ENCODE measurements at regions of chr17 and their contacts with region 1.

Region 1: GRCh38 chr17:70767102-70767701 is 597.9 kb downstream of the KCNJ2 start:
- DNase-seq: peak; percentile 28
- H3K4me3 Mint-ChIP-seq: no peak overlapping the region
- H3K27ac Mint-ChIP-seq: no peak overlapping the region
- H3K4me1 Mint-ChIP-seq: no peaks in the 10 kb centered on the region
- H3K27me3 Mint-ChIP-seq: no peaks in the 10 kb centered on the region
- CTCF ChIP-seq: peak; percentile 57

Region 2: GRCh38 chr17:70539132-70539924 is 227.9 kb before region 1 on chr17:
- CTCF ChIA-PET with region 1: no interaction called
- intact Hi-C with region 1: no loop called
- DNase-seq: no peak
- H3K4me3 Mint-ChIP-seq: no peak overlapping the region
- H3K27ac Mint-ChIP-seq: no peak overlapping the region
- H3K4me1 Mint-ChIP-seq: no peaks in the 10 kb centered on the region
- H3K27me3 Mint-ChIP-seq: no peaks in the 10 kb centered on the region
- CTCF ChIP-seq: no peak

Region 3: DNA sequence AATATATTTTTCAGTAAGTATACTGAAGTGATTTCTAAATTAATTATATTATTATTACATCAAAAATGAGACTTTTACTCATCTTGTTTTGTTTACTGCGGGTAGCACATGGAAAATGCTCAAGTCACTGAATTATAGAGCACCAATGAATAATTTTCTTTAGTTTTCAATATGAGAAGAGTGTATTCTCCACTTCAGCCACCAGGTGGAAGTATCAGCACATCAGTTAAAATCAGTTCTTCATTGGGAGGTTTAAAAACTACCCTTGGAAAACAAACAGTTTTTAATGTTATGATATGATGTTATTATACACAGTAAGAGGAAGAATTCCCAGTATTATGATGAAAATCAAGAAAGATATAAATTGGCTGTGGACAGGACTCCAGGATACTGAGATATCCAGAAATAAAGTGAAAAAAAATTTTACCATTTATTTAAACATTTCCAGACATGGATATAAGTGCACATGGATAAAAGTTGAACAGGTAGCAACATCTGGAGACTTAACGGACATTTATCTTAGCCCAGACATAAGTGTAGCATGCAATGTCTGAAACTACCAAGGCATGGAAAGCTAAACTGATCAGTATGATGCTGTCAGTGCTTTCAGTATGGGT is 130.6 kb before region 1 on chr17:
- CTCF ChIA-PET with region 1: no interaction called
- intact Hi-C with region 1: loop called (anchors 5 kb)
- DNase-seq: peak; percentile 25
- H3K4me3 Mint-ChIP-seq: no peak overlapping the region
- H3K27ac Mint-ChIP-seq: no peak overlapping the region
- H3K4me1 Mint-ChIP-seq: no peaks in the 10 kb centered on the region
- H3K27me3 Mint-ChIP-seq: peaks cover 20% of the 10 kb centered on the region
- CTCF ChIP-seq: peak; percentile 59

Region 4: GRCh38 chr17:70829876-70830275 is 62.7 kb after region 1 on chr17:
- CTCF ChIA-PET with region 1: no interaction called
- intact Hi-C with region 1: no loop called
- DNase-seq: no peak
- H3K4me3 Mint-ChIP-seq: no peak overlapping the region
- H3K27ac Mint-ChIP-seq: no peak overlapping the region
- H3K4me1 Mint-ChIP-seq: no peaks in the 10 kb centered on the region
- H3K27me3 Mint-ChIP-seq: no peaks in the 10 kb centered on the region
- CTCF ChIP-seq: no peak

Region 5: DNA sequence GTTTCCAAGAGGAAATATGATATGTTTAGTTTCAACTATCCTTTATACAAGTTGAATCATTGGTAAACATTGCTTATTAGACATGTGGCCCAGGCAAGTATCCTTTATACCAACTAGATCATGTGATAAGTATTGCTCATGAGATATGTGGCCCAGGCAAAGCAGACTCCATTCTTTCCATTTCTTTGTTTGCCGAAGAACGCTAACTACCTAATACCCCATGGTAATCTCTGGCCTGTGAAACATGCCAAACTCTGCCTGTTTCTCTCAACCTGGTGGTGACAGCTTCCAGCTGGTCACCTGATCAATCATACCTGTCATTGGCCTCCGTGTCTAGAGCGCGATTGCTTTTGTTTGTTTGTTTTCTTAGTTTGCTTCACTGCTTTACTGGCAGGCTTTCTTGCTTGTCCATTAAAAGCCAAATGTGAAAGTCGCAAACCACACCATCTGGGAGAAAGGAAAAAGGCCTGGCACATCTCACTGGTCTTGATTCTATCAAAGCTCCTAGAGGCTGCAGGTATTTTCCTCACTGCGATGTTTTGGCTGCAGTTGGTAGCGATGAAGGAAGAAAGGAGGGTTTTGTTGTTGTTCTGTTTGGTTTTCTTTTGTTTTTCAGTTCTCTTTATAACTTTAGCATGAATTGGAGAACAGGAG is 88.3 kb after region 1 on chr17:
- CTCF ChIA-PET with region 1: no interaction called
- intact Hi-C with region 1: no loop called
- DNase-seq: no peak
- H3K4me3 Mint-ChIP-seq: no peak overlapping the region
- H3K27ac Mint-ChIP-seq: no peak overlapping the region
- H3K4me1 Mint-ChIP-seq: no peaks in the 10 kb centered on the region
- H3K27me3 Mint-ChIP-seq: no peaks in the 10 kb centered on the region
- CTCF ChIP-seq: no peak

Region 6: DNA sequence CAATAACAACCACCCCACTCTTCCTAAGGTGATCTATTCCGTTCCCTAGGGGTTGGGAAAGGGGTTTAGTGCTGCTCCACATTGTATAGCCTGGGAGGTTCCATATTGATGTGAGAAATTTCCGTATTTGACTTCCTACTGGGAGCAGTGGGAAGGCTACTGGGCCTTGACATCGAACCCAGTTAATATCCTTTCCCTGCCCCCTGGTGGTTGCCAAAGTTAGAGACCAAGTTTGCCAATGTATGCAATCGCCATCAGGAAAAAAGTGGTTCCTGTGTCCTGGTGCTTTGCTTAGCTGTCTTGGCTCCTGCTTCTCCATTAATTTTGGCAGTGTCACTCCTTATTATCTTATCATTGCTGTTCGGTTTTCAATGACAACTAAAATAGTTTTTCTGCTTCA is 317.0 kb after region 1 on chr17:
- CTCF ChIA-PET with region 1: interaction called, 11 read pairs
- intact Hi-C with region 1: loop called (anchors 1 kb)
- DNase-seq: peak; percentile 67
- H3K4me3 Mint-ChIP-seq: no peak overlapping the region
- H3K27ac Mint-ChIP-seq: no peak overlapping the region
- H3K4me1 Mint-ChIP-seq: no peaks in the 10 kb centered on the region
- H3K27me3 Mint-ChIP-seq: no peaks in the 10 kb centered on the region
- CTCF ChIP-seq: no peak

Region 7: GRCh38 chr17:71467719-71468118 is 700.5 kb after region 1 on chr17:
- CTCF ChIA-PET with region 1: no interaction called
- intact Hi-C with region 1: loop called (anchors 5 kb)
- DNase-seq: peak; percentile 52
- H3K4me3 Mint-ChIP-seq: peak overlapping the region; percentile 52
- H3K27ac Mint-ChIP-seq: peak overlapping the region; percentile 90
- H3K4me1 Mint-ChIP-seq: peaks cover 38% of the 10 kb centered on the region
- H3K27me3 Mint-ChIP-seq: no peaks in the 10 kb centered on the region
- CTCF ChIP-seq: no peak